ENCODE measurements at regions of chr1 and their contacts with region 1.

Region 1: DNA sequence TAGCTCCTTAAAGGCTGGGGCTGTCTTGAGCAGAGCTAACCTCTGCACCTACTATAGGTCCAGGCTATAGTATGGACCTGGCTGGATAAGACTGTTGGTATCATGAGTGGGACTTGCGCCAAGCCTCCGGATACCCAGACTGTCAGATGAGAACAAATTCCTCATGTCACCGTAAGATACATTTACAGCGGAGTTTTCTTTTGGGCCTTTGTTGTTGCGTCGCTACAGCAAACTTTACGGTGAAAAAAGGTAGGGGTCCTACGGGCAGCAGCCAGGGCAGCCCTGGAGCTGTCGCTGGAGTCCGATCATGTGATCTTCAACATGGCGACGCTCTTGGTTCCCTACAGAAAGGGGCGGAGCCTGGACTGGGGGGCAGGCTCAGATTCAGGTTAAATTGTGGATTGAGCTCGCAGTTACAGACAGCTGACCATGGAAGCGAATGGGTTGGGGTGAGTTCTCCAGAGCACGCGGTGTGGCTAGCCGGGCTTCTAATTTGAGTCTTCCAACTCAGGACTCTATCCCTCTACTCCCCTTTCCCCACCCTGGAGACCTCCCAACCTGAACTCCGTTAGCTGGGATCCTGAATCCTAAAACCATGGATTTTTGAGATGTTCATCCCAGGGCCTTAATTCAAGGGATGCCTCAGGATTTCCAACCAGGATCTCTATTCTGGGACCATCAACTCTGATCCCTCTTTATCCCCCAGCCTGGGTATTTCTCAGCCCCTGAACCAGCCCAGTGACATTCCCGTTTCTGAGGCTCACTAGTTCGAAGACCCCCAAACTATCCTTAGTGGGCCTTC is at the start of gene UROD:
- DNase-seq: peak; percentile 94
- H3K4me3 Mint-ChIP-seq: peak within 1 kb of the TSS; percentile 81
- H3K27ac Mint-ChIP-seq: peak within 1 kb of the TSS; percentile 85
- H3K4me1 Mint-ChIP-seq: peaks cover 47% of the 10 kb centered on the region
- H3K27me3 Mint-ChIP-seq: no peaks in the 10 kb centered on the region
- total RNA-seq, gene UROD: 67.1 to 74.9 TPM

Region 2: DNA sequence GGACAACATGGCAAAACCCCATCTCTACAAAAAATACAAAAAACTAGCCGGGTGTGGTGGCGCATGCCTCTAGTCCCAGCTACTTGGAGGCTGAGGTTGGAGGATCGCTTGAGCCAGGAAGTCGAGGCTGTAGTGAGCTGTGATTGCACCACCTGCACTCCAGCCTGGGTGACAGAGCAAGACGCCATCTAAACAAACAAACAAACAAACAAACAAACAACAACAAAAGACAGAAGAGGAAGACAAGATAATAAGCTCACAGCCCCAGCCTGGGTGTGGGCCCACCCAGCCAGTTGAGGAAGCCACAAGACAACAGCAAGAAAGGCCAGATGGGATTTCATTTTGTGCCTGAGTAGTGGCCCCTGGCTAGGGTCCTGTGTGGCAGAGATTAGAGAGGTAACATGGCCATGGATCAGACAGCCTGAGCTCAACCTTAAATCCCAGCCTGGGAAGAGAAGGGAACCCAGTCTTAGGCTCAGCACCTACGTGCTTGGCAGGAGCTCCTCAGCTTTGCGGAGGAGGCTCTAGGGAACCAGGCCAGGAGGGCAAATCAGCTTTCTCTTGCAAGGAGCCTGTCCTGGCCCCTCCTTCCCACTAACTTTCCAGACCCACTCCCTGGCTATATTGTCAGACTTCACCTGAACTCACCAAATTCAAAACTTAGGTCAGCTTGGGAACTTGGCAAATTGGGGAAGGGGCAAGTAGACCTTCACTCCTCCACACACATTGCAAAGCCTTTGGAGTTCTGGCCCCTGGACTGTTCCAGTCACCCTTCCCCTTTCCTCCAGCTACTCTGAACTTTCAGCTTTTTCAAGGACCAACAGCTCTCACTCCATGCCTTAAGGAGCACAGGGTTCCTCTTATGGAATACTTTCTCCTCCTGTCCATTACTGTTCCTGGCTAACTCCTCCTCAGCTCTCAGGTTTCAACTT is 219.0 kb before region 1 on chr1:
- CTCF ChIA-PET with region 1: interaction called, 27 read pairs
- POLR2A ChIA-PET with region 1: interaction called, 10 read pairs
- DNase-seq: no peak
- H3K4me3 Mint-ChIP-seq: no peak overlapping the region
- H3K27ac Mint-ChIP-seq: no peak overlapping the region
- H3K4me1 Mint-ChIP-seq: peaks cover 2% of the 10 kb centered on the region
- H3K27me3 Mint-ChIP-seq: no peaks in the 10 kb centered on the region

Region 3: DNA sequence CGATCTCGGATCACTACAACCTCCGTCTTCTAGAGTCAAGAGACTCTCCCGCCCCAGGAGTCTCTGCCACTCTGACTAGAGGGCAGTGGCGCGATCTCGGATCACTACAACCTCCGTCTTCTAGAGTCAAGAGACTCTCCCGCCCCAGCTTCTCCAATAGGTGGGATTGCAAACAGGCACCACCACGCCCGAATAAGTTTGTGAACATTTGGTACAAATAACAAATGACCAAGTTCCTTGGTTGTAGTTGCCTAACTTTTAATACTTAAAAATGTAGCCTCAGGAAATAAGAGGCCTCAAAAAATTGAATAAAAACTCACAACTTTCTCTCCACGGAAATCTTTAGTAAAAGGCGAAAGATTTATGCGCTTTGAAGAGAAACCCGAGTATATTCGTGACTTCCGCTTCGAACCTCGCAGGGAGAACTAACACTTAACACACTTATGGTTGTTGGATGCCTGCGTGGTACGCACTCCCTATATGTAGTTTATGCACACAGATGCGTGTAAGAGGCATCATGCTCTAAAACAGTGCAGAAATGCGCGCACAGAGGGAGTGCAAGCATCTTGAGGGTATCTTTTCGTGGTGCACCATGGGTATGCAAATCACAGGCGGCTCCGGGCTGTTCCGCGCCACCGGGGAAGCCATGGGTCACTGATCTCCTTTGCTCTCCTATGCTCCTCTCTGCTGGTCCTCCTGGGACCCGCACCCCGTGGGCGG is 192.3 kb before region 1 on chr1:
- CTCF ChIA-PET with region 1: interaction called, 4 read pairs
- POLR2A ChIA-PET with region 1: interaction called, 51 read pairs
- DNase-seq: peak; percentile 87
- H3K4me3 Mint-ChIP-seq: peak overlapping the region; percentile 85
- H3K27ac Mint-ChIP-seq: peak overlapping the region; percentile 98
- H3K4me1 Mint-ChIP-seq: peaks cover 45% of the 10 kb centered on the region
- H3K27me3 Mint-ChIP-seq: no peaks in the 10 kb centered on the region

Region 4: GRCh38 chr1:45303582-45304310 is 291.7 kb after region 1 on chr1:
- CTCF ChIA-PET with region 1: interaction called, 331 read pairs
- POLR2A ChIA-PET with region 1: interaction called, 61 read pairs
- DNase-seq: peak; percentile 99
- H3K4me3 Mint-ChIP-seq: peak overlapping the region; percentile 83
- H3K27ac Mint-ChIP-seq: peak overlapping the region; percentile 86
- H3K4me1 Mint-ChIP-seq: peaks cover 44% of the 10 kb centered on the region
- H3K27me3 Mint-ChIP-seq: no peaks in the 10 kb centered on the region

Region 5: DNA sequence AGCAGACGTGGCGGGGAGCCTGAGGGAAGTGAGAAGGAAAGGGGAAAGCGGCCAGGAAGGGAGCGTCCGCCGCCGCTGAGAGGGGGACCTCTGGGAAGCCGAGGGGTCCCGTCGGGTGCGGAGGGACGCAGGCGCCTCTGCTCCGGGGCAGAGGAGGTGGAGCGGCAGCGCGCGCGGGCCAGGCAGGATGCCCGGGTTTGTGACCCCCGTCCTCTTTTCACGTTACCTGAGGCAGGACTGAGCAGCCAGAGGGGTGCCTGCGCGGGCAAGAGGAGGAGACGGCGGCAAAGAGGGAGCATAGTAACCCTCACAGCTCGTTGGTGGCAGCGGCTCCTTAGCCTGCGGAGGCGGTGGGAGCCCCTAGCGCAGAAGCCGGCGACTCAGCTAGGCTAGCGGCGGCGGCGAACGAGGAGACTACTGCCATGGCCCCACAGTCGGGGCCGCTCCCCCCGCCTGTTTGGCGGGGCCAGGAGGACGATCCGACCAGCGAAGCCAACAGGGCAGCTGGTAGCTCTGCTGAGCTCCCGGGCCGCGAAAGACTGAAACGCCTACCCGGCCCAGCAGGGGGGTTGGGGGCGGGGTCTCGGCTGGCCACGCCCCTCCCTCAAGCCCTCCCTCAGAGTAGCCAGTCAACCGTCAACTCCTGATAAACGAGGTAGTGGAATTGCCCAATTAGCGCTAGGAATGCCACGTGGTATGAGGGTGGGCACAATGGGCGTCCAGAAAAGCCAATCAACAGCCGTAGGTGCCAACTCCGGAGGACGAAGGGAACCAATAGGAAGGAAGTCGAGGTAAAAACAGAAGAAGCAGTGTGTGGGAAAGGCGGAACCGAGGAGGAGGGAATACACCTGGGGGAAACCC is 478.8 kb after region 1 on chr1 and contains the start of gene TESK2:
- CTCF ChIA-PET with region 1: interaction called, 104 read pairs
- POLR2A ChIA-PET with region 1: interaction called, 14 read pairs
- DNase-seq: peak; percentile 98
- H3K4me3 Mint-ChIP-seq: no peak within 1 kb of the TSS
- H3K27ac Mint-ChIP-seq: no peak within 1 kb of the TSS
- H3K4me1 Mint-ChIP-seq: peaks cover 7% of the 10 kb centered on the region
- H3K27me3 Mint-ChIP-seq: peaks cover 7% of the 10 kb centered on the region
- total RNA-seq, gene TESK2: 3.7 to 4.3 TPM

Measured in activated CD4-positive, alpha-beta memory T cell treated with anti-CD3 and anti-CD28 coated beads, Interleukin-2, amount 10 ng/mL, durations not matched to agents 7 days and 5 days (primary cell).